Mucosa of descending colon (tissue), 3 donors: ENCODE measurements at regions of chr17 and their contacts with region 1.

Region 1: DNA sequence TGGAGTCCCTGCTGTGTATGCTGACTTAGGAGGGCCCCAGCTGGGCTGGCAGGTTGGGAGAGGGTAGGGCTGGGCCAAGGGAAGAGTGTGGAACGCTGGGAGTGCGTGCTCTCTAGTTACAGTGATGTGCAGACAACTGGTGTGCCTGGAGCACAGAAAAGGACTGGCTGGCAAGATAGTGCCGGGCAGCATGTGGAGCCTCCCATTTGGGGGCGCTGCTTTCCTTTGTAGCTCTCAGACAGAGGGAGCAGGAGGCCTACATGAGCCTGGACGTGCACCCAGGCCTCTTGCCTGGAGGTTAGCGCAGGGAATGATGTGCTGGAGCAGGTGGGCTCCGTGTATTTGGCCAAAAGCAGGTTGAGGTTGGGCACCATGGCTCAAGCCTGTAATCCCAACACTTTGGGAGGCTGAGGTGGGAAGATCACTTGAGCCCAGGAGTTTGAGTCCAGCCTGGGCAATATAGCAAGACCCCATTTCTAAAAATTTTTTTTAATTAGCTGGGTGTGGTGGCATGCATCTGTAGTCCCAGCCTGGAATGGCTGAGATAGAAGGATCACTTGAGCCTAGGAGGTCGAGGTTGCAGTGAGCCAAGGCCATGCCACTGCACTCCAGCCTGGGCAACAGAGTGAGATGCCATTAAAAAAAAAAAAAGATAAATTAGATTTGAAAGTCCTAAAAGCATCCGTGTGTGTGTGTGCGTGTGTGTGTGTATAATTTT is 26.1 kb upstream of the TBX4 start:
- DNase-seq: peak in 2 of 3 donors; percentile 51 to 57
- ATAC-seq: peak; percentile 57
- H3K4me3 ChIP-seq: no peak overlapping the region
- H3K4me1 ChIP-seq: no peaks in the 10 kb centered on the region
- CTCF ChIP-seq: no peak

Region 2: GRCh38 chr17:61366715-61367413 is 59.3 kb before region 1 on chr17:
- intact Hi-C with region 1: no loop called
- DNase-seq: no peak
- ATAC-seq: peak; percentile 61
- H3K4me3 ChIP-seq: no peak overlapping the region
- H3K4me1 ChIP-seq: no peaks in the 10 kb centered on the region
- CTCF ChIP-seq: no peak

Region 3: GRCh38 chr17:61556224-61557188 is 130.3 kb after region 1 on chr17:
- intact Hi-C with region 1: loop called in 1 of 2 experiments (anchors 5 kb)
- DNase-seq: no peak
- ATAC-seq: no peak
- H3K4me3 ChIP-seq: no peak overlapping the region
- H3K4me1 ChIP-seq: no peaks in the 10 kb centered on the region
- CTCF ChIP-seq: no peak